ENCODE measurements at regions of chr3 and their contacts with region 1.

Region 1: GRCh38 chr3:12719984-12720898 is 38.8 kb downstream of the TMEM40 start:
- DNase-seq: peak; percentile 79
- H3K4me3 Mint-ChIP-seq: peak overlapping the region; percentile 38
- H3K27ac Mint-ChIP-seq: no peak overlapping the region
- H3K4me1 Mint-ChIP-seq: peaks cover 9% of the 10 kb centered on the region
- H3K27me3 Mint-ChIP-seq: no peaks in the 10 kb centered on the region

Region 2: DNA sequence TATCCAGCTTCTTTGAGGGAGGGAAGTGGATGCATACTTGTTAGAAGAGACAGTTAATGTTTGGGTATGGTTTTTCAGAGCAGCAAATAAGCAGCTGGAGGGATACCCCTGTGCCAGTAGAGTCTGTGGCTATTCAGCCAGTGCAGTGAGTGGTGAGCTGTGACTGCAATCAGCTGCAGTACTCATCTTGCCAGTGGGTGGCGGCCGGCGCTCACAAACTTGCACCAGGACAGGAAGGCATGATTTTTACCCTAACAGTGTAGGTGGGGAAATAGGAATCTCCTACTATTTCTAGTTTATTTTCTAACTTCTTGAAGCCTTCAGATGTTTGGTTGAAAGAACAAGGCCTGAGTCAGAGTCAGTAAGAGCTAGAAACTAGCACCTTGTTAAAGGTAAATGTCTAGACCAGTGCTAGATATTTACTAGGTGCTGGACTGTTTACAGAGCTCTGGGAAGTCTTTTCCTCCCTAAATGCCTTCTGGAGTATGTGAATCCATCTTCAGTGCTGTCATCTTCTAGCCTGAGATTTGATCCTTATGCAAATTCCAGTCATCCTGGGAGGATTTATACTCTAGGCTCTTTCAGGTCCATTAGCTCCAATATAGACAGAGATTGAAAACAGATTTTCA is 585.1 kb before region 1 on chr3:
- CTCF ChIA-PET with region 1: interaction called, 3 read pairs
- POLR2A ChIA-PET with region 1: no interaction called
- intact Hi-C with region 1: loop called (anchors 2 kb)
- DNase-seq: peak; percentile 78
- H3K4me3 Mint-ChIP-seq: no peak overlapping the region
- H3K27ac Mint-ChIP-seq: no peak overlapping the region
- H3K4me1 Mint-ChIP-seq: no peaks in the 10 kb centered on the region
- H3K27me3 Mint-ChIP-seq: peaks cover 12% of the 10 kb centered on the region

Region 3: GRCh38 chr3:12556671-12557472 is 163.4 kb before region 1 on chr3 and contains the start of gene MKRN2:
- CTCF ChIA-PET with region 1: interaction called, 6 read pairs
- POLR2A ChIA-PET with region 1: no interaction called
- intact Hi-C with region 1: loop called (anchors 5 kb)
- DNase-seq: peak; percentile 89
- H3K4me3 Mint-ChIP-seq: peak within 1 kb of the TSS; percentile 78
- H3K27ac Mint-ChIP-seq: peak within 1 kb of the TSS; percentile 91
- H3K4me1 Mint-ChIP-seq: peaks cover 57% of the 10 kb centered on the region
- H3K27me3 Mint-ChIP-seq: peaks cover 26% of the 10 kb centered on the region
- total RNA-seq, gene MKRN2: 28.5 to 30.1 TPM

Region 4: GRCh38 chr3:12611117-12611516 is 109.1 kb before region 1 on chr3:
- CTCF ChIA-PET with region 1: interaction called, 4 read pairs
- POLR2A ChIA-PET with region 1: no interaction called
- intact Hi-C with region 1: loop called (anchors 2 kb)
- DNase-seq: no peak
- H3K4me3 Mint-ChIP-seq: no peak overlapping the region
- H3K27ac Mint-ChIP-seq: no peak overlapping the region
- H3K4me1 Mint-ChIP-seq: peaks cover 46% of the 10 kb centered on the region
- H3K27me3 Mint-ChIP-seq: no peaks in the 10 kb centered on the region

Region 5: DNA sequence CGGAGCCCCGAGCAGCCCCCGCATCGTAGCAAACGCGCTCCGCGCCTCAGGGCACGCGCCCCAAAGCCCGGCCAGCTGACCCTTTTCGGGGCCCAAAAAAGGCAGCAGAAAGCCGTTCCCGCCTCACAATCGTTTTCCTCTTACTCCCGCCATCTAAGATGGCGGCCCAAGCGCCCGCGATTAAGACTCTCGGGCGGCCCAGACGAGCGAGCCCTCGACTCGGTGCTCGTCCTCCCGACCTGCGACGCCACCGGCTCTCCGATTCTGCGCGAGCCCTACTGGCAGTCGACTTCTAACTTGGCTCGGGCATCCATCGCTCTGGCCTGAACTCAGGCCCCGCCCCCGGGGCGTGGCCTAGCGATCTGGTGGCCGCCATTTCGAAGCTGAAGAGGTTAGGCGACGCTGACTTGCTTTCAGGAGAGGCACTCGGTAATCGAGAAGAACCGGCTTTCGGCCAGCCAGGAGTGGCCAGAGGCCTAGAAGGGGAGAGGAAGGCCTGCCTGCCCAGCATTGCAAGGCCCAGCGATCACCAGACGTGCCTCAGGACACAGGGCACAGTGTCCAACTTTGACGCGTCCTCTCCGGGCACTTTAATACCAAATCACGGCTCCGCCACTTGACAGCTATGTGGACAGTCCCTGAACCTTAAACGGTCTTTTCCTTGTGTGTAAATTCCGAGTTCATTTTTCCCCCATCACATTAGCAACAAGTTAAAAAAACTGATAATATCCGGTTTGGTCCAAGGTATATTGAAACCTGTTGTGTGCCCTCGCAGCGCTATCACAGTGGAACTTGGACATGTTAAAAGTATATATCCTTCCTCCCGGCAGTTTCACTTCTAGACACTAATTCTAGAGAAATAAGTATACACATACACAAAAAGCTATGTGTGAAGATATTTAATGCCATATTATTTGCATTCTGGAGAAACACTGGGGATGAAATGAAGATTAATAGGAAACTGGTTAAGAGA is 56.0 kb before region 1 on chr3 and contains the start of gene RAF1:
- CTCF ChIA-PET with region 1: no interaction called
- POLR2A ChIA-PET with region 1: no interaction called
- intact Hi-C with region 1: loop called (anchors 2 kb)
- DNase-seq: peak; percentile 98
- H3K4me3 Mint-ChIP-seq: peak within 1 kb of the TSS; percentile 88
- H3K27ac Mint-ChIP-seq: peak within 1 kb of the TSS; percentile 87
- H3K4me1 Mint-ChIP-seq: peaks cover 29% of the 10 kb centered on the region
- H3K27me3 Mint-ChIP-seq: no peaks in the 10 kb centered on the region
- total RNA-seq, gene RAF1: 64.6 to 66.9 TPM

Region 6: GRCh38 chr3:12687962-12688361 is 32.3 kb before region 1 on chr3:
- CTCF ChIA-PET with region 1: no interaction called
- POLR2A ChIA-PET with region 1: no interaction called
- intact Hi-C with region 1: no loop called
- DNase-seq: no peak
- H3K4me3 Mint-ChIP-seq: no peak overlapping the region
- H3K27ac Mint-ChIP-seq: no peak overlapping the region
- H3K4me1 Mint-ChIP-seq: no peaks in the 10 kb centered on the region
- H3K27me3 Mint-ChIP-seq: peaks cover 7% of the 10 kb centered on the region

Region 7: GRCh38 chr3:12782172-12782815 is 62.1 kb after region 1 on chr3:
- CTCF ChIA-PET with region 1: no interaction called
- POLR2A ChIA-PET with region 1: no interaction called
- intact Hi-C with region 1: no loop called
- DNase-seq: no peak
- H3K4me3 Mint-ChIP-seq: no peak overlapping the region
- H3K27ac Mint-ChIP-seq: no peak overlapping the region
- H3K4me1 Mint-ChIP-seq: no peaks in the 10 kb centered on the region
- H3K27me3 Mint-ChIP-seq: peaks cover 19% of the 10 kb centered on the region

Region 8: DNA sequence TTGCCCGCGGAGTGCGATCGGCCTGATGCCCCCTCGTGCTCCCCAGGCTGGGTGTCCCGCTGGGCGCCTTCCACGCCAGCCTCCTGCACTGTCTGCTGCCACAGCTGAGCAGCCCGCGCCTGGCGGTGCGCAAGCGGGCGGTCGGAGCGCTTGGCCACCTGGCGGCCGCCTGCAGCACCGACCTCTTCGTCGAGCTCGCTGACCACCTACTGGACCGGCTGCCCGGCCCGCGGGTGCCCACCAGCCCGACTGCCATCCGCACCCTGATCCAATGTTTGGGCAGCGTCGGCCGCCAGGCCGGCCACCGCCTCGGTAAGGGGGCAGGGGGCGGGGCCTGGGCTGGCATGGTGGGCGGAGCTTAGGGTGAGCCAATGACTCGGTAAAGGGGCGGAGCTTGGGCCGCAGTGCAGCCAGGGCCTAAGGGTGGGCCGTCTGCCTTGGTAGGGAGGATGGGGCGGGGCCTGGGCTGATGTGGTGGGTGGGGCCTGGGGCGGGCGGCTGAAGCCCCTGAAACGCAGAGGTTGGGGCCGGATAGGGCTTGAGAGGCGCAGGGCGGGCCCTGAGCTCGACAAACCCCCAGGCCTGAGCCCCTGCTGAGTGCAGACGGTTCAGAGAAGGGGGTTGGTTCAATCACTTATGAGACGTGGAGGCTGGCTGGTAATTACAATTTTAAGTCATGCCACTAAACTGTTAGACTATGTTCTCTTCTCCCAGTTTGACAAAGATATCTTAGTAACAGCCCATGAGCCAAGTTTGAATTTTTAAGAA is 90.0 kb after region 1 on chr3:
- CTCF ChIA-PET with region 1: interaction called, 10 read pairs
- POLR2A ChIA-PET with region 1: no interaction called
- intact Hi-C with region 1: no loop called
- DNase-seq: peak; percentile 94
- H3K4me3 Mint-ChIP-seq: peak overlapping the region; percentile 52
- H3K27ac Mint-ChIP-seq: no peak overlapping the region
- H3K4me1 Mint-ChIP-seq: peaks cover 3% of the 10 kb centered on the region
- H3K27me3 Mint-ChIP-seq: no peaks in the 10 kb centered on the region

Region 9: GRCh38 chr3:12853191-12853741 is 133.0 kb after region 1 on chr3:
- CTCF ChIA-PET with region 1: no interaction called
- POLR2A ChIA-PET with region 1: no interaction called
- intact Hi-C with region 1: no loop called
- DNase-seq: no peak
- H3K4me3 Mint-ChIP-seq: no peak overlapping the region
- H3K27ac Mint-ChIP-seq: no peak overlapping the region
- H3K4me1 Mint-ChIP-seq: no peaks in the 10 kb centered on the region
- H3K27me3 Mint-ChIP-seq: peaks cover 4% of the 10 kb centered on the region

Region 10: DNA sequence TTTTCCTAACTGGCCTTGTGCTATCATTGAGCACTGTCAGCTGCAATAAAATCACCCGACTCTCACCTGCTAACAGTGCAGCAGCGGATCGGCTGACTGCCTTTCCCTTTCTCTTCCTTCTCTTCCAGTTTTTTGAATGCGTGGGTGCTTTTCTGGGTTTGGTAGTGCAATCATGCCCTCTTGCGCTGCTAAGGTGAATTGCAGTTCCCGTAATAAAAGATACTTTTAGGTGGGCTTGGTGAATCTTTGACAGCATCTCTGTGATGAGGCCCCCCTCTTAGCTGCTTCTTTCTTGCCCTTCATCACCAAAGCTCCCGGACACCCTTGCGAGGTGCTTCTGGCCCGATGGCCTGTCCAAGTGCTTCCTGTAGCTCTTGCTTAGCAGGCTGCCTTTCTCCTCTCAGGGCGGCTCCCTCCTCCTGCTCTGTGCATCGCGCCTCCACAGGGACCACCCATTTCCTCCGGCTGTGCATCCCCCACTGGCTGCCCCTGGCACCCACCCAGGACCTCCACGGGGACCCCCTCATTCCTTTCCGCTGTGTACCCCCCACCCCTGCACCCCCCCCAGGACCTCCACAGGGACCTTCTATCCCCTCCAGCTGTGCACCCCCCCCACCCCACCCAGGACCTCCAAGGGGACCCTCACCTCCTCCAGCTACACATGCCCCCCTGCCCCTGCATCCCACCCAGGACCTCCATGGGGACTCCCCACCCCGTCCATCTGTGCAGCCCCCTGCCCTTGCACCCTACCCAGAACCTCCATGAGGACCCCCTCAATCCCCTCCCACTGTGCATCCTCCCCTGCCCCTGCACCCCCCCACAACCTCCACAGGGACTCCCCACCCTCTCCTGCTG is 172.0 kb after region 1 on chr3:
- CTCF ChIA-PET with region 1: interaction called, 3 read pairs
- POLR2A ChIA-PET with region 1: no interaction called
- intact Hi-C with region 1: loop called (anchors 5 kb)
- DNase-seq: peak; percentile 63
- H3K4me3 Mint-ChIP-seq: no peak overlapping the region
- H3K27ac Mint-ChIP-seq: no peak overlapping the region
- H3K4me1 Mint-ChIP-seq: peaks cover 12% of the 10 kb centered on the region
- H3K27me3 Mint-ChIP-seq: peaks cover 10% of the 10 kb centered on the region

Region 11: DNA sequence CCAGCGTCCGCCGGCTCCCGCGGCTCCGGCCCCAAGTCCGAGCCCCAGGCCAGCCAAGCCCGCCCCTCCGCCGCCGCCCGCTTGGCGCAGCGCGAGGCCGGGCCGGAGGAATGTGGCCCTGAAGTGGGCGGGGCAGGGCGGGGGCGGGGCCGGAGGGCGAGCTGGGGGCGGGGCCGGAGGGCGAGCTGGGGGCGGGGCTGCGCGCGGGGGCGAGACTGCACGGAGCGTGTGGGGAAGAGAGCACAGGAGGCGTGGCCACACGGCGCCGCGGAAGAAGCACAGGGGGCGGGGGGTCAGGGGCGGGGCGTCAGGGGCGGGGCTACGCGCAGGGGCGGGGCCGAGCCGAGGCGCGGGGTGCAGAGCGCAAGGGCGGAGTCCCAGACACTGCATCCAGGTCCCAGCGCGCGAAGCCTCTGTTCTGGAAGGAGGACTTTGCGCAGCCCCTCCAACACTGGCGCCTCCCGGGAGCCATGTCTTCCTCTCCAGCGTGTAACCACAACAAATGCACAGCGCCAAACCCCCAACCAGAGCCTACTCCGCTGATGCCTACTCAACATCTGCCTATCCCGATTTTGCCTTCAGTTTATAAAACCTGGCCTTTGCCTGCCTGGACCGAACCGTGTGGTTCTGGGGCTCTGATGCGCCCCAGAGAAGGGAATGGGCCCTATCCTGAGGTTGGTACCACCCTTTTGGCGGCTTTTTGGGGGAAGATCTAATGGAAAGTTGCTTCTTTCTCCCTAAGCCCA is 247.5 kb after region 1 on chr3:
- CTCF ChIA-PET with region 1: no interaction called
- POLR2A ChIA-PET with region 1: no interaction called
- intact Hi-C with region 1: no loop called
- DNase-seq: peak; percentile 93
- H3K4me3 Mint-ChIP-seq: peak overlapping the region; percentile 71
- H3K27ac Mint-ChIP-seq: peak overlapping the region; percentile 67
- H3K4me1 Mint-ChIP-seq: peaks cover 58% of the 10 kb centered on the region
- H3K27me3 Mint-ChIP-seq: no peaks in the 10 kb centered on the region

Measured in activated CD4-positive, alpha-beta memory T cell treated with anti-CD3 and anti-CD28 coated beads for 36 hours (primary cell).